Posterior cingulate gyrus (tissue), 11 donors: ENCODE measurements at regions of chr9 and their contacts with region 1.

Region 1: GRCh38 chr9:37892063-37892462 is 11.9 kb downstream of the SLC25A51 start:
- DNase-seq: no peak

Region 2: GRCh38 chr9:37818849-37819248 is 73.2 kb before region 1 on chr9:
- intact Hi-C with region 1: loop called (anchors 5 kb)
- DNase-seq: no peak